Esophagus muscularis mucosa (tissue), 4 donors: ENCODE measurements at regions of chr17 and their contacts with region 1.

Region 1: GRCh38 chr17:29622337-29623282 is at the start of gene CORO6:
- DNase-seq: no peak
- H3K4me3 ChIP-seq: peak within 1 kb of the TSS; percentile 73 to 85 (median 78)
- H3K27ac ChIP-seq: peak within 1 kb of the TSS; percentile 88 to 92 (median 90)
- H3K4me1 ChIP-seq: peaks cover 58 to 71% (median 68%) of the 10 kb centered on the region in 4 donors
- H3K27me3 ChIP-seq: peaks cover 0 to 6% (median 0%) of the 10 kb centered on the region in 4 donors
- CTCF ChIP-seq: no peak
- EP300 ChIP-seq: no peak
- POLR2A ChIP-seq: peak; percentile 63
- total RNA-seq, gene CORO6: 43.7 to 67.7 (median 46.9) TPM

Region 2: DNA sequence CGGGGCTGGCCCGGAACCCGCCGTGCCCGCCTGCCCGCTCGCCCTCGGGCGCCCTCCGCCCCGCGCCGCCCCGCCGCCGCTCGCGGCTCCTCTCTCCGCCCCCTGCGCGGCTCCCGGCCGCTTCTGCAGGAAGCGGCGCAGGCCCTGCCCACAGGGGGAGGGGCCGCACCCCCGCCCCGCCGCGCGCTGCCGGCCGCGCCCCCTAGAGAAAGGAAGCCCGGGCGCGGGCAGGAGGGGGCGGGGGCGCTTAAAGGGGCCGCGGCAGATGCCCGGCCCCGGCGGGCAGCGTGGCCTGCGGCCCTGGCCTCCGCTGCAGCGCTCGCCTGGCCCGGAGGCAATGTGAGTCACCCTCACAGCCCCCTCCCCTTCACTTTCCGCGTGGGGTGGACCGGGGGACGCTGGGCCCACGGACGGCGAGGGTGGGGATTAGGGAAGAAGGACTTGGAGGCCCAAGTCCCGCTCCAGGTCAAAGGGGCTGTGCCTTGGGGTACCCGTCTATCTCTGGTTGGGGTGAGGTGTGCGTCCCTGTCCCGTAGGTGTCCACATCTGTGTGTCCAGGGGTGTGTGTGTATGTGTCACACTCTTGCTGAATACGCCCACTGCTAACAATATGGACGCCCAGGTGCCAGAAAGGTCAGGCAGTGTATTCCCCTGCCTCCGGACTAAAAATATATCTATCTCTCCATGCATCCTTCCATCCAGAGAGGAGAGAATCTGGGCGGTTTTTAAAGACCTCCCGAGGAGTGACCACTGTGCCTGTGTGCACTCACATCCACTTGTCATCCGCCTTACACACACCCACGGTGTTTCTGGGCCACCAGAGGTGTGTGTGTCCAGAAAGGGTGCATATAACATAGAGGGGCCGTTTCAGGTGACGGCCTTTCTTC is 32.8 kb before region 1 on chr17 and contains the start of gene GIT1:
- intact Hi-C with region 1: loop called (anchors 5 kb)
- DNase-seq: no peak
- H3K4me3 ChIP-seq: peak within 1 kb of the TSS; percentile 85 to 99 (median 88)
- H3K27ac ChIP-seq: peak within 1 kb of the TSS; percentile 85 to 94 (median 88)
- H3K4me1 ChIP-seq: peaks cover 71 to 86% (median 82%) of the 10 kb centered on the region in 4 donors
- H3K27me3 ChIP-seq: no peaks in the 10 kb centered on the region
- CTCF ChIP-seq: peak in 1 of 3 experiments; percentile 52
- EP300 ChIP-seq: no peak
- POLR2A ChIP-seq: no peak
- total RNA-seq, gene GIT1: 28.7 to 50.4 (median 39.9) TPM

Region 3: DNA sequence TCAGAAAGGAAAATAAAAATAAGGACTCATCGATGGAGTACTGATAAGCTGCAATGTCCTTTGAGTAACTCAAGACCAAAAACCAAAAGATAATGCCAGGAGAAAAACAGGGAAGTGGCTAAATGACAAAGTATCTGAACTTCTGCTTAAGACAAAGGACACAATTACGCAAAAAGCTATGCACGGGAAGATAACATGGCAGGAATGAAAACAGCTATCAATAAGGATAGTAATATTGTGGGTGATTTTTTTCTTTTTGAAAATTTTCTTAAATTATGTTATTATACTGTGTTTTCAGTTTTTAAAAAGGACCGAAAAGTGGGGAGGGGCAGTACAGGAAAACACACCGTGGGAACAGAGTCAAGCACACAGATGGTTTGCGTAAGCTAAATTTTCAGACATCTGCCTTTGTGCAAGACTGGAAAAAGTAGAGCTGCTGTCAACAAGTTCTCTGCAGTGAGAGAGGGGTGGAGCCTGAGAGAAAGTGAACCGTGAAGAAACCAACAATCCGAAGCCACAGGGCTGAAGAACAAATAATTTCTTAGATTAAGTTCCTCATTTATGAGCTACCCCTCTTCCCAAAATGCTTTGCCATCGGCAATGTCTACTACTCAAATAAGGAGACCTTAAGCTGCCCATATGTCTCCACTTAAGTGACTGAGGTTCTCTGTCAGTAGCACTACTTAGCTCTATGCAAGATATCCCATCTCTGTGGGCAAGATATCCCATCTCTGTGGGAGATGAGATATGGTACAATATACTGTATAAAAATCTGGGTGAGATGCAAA is 100.0 kb after region 1 on chr17:
- intact Hi-C with region 1: no loop called
- DNase-seq: peak; percentile 92
- H3K4me3 ChIP-seq: peak overlapping the region in 3 of 4 donors; percentile 3 to 29 (median 3)
- H3K27ac ChIP-seq: peak overlapping the region; percentile 62 to 76 (median 74)
- H3K4me1 ChIP-seq: peaks cover 40 to 53% (median 44%) of the 10 kb centered on the region in 4 donors
- H3K27me3 ChIP-seq: no peaks in the 10 kb centered on the region
- CTCF ChIP-seq: no peak
- EP300 ChIP-seq: no peak
- POLR2A ChIP-seq: peak; percentile 10